ENCODE measurements at regions of chr2 and their contacts with region 1.

Region 1: DNA sequence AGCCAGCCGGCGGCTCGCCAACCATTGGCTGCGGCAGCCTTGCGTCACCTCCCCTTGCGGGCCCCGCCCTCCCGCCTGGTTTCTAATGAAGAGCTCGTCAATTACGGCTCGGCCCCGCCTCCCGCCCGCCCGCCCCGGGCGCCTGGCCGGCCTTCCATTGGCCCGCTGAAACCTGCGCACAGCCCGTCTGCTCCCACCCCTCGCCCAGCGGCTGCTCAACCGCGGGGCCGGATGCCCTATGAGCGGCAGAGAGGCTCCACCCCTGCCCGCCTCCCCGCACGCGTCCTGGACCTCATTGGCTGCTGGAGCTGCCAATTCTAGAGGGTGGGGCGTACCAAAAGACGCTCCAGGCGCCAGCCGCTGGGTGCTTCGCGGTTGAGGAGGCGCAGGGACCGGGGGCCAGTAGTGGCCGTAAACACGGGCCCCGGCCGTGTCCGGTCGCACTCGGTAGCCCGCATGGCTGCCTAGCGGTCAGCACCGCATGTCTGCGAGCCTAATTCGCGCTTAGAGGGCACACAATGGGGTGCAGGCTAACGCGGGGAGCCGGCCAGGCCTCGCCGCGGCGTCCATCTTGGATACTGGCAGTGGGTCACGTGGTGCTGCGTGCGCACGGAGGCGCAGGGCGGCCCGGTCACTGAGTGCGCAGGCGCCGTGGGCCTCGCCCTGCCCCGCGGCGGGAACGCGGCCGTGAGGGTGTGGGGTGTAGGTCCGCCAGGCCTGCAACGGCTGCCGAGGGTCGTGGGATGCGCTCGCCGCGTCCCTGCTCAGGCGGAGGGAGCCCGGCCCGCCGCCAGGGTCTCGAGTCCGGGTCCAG is 454 bp upstream of the HDAC4 start:
- DNase-seq: peak; percentile 100
- H3K4me3 Mint-ChIP-seq: peak overlapping the region; percentile 93
- H3K27ac Mint-ChIP-seq: peak overlapping the region; percentile 99
- H3K4me1 Mint-ChIP-seq: peaks cover 45% of the 10 kb centered on the region
- H3K27me3 Mint-ChIP-seq: peaks cover 20% of the 10 kb centered on the region

Region 2: GRCh38 chr2:239143858-239144718 is 257.2 kb before region 1 on chr2:
- intact Hi-C with region 1: loop called (anchors 10 kb)
- DNase-seq: peak; percentile 68
- H3K4me3 Mint-ChIP-seq: no peak overlapping the region
- H3K27ac Mint-ChIP-seq: no peak overlapping the region
- H3K4me1 Mint-ChIP-seq: peaks cover 5% of the 10 kb centered on the region
- H3K27me3 Mint-ChIP-seq: no peaks in the 10 kb centered on the region

Region 3: DNA sequence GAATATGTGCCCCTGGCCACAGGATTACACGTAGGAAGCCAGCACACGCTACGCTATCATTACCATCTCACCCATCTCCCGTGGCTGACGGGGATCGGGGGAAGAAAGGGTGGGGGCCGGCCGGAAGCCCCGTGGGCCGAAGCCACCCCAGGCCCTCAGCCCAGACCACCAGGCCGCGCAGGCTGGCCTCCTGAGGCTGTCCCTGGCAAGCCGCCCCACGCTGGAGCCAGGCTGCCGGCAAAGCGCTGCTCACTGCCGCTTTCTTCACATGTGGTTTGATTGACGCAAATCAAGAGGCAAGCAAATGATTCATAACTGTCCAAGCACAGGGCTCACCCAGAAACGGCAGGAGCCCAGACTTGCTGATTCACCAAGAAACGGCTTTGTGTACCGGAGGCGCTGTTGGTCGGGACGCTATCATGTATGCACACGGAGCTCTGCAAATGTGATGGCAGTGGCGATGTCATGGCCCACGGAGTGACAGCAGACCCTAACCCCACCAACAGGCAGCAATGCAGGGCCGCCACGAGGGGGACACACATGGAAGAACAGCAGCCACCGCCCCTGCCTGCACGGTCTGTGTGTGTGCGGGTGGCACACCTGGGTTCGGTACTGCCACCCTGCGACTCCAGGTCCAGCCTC is 126.1 kb before region 1 on chr2:
- intact Hi-C with region 1: loop called (anchors 2 kb)
- DNase-seq: peak; percentile 95
- H3K4me3 Mint-ChIP-seq: peak overlapping the region; percentile 79
- H3K27ac Mint-ChIP-seq: peak overlapping the region; percentile 87
- H3K4me1 Mint-ChIP-seq: peaks cover 70% of the 10 kb centered on the region
- H3K27me3 Mint-ChIP-seq: peaks cover 9% of the 10 kb centered on the region

Region 4: GRCh38 chr2:239326831-239327535 is 74.3 kb before region 1 on chr2:
- intact Hi-C with region 1: loop called (anchors 2 kb)
- DNase-seq: peak; percentile 93
- H3K4me3 Mint-ChIP-seq: peak overlapping the region; percentile 75
- H3K27ac Mint-ChIP-seq: peak overlapping the region; percentile 85
- H3K4me1 Mint-ChIP-seq: peaks cover 74% of the 10 kb centered on the region
- H3K27me3 Mint-ChIP-seq: no peaks in the 10 kb centered on the region

Region 5: DNA sequence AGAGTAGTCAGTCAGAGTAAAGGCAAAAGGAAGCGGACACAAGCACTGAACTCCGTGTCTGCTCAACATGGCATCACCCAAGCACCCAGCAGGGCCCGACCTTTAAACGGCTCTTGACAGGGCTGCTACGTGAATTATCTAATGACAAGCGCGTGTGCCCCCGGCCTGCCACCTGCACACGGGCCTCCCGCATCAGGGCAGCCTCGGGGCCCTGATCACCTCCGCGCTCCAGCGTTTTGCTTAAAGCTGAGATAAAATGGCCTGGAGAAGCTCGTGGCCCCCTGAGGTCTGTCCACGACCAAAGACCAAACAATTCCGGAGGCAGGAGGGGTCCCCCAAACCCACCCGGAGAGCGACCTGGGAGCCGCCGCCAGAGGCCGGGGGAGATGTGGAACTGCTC is 623.5 kb after region 1 on chr2:
- intact Hi-C with region 1: loop called (anchors 1 kb)
- DNase-seq: no peak
- H3K4me3 Mint-ChIP-seq: peak overlapping the region; percentile 88
- H3K27ac Mint-ChIP-seq: peak overlapping the region; percentile 94
- H3K4me1 Mint-ChIP-seq: peaks cover 17% of the 10 kb centered on the region
- H3K27me3 Mint-ChIP-seq: peaks cover 5% of the 10 kb centered on the region